H1 (cell line): ENCODE measurements at regions of chr20 and their contacts with region 1.

Region 1: GRCh38 chr20:44111712-44112335 is 75.2 kb downstream of the JPH2 start:
- DNase-seq: no peak
- H3K4me3 ChIP-seq: no peak overlapping the region
- H3K27ac ChIP-seq: no peak overlapping the region
- H3K4me1 ChIP-seq: no peaks in the 10 kb centered on the region; a peak in 1 of 7 replicates
- H3K27me3 ChIP-seq: no peaks in the 10 kb centered on the region
- CTCF ChIP-seq: no peak
- EP300 ChIP-seq: no peak
- POLR2A ChIP-seq: no peak
- RAD21 ChIP-seq: no peak

Region 2: GRCh38 chr20:43558412-43559146 is 553.2 kb before region 1 on chr20 and contains the start of gene SGK2:
- CTCF ChIA-PET with region 1: no interaction called
- POLR2A ChIA-PET with region 1: no interaction called
- DNase-seq: no peak
- H3K4me3 ChIP-seq: no peak within 1 kb of the TSS
- H3K27ac ChIP-seq: no peak within 1 kb of the TSS
- H3K4me1 ChIP-seq: no peaks in the 10 kb centered on the region
- H3K27me3 ChIP-seq: no peaks in the 10 kb centered on the region
- CTCF ChIP-seq: no peak
- EP300 ChIP-seq: no peak
- POLR2A ChIP-seq: no peak
- RAD21 ChIP-seq: no peak
- total RNA-seq, gene SGK2: 0.23 TPM in 1 of 2 replicates, not detected in the other

Region 3: GRCh38 chr20:43963872-43964791 is 147.7 kb before region 1 on chr20:
- CTCF ChIA-PET with region 1: no interaction called
- POLR2A ChIA-PET with region 1: no interaction called
- DNase-seq: no peak
- H3K4me3 ChIP-seq: no peak overlapping the region
- H3K27ac ChIP-seq: no peak overlapping the region
- H3K4me1 ChIP-seq: peaks cover 0 to 20% (median 5%) of the 10 kb centered on the region in 4 experiments; a peak in 5 of 7 replicates
- H3K27me3 ChIP-seq: peaks cover 0 to 4% (median under 1%) of the 10 kb centered on the region in 4 experiments; a peak in 3 of 7 replicates
- CTCF ChIP-seq: no peak
- EP300 ChIP-seq: no peak
- POLR2A ChIP-seq: no peak
- RAD21 ChIP-seq: no peak

Region 4: DNA sequence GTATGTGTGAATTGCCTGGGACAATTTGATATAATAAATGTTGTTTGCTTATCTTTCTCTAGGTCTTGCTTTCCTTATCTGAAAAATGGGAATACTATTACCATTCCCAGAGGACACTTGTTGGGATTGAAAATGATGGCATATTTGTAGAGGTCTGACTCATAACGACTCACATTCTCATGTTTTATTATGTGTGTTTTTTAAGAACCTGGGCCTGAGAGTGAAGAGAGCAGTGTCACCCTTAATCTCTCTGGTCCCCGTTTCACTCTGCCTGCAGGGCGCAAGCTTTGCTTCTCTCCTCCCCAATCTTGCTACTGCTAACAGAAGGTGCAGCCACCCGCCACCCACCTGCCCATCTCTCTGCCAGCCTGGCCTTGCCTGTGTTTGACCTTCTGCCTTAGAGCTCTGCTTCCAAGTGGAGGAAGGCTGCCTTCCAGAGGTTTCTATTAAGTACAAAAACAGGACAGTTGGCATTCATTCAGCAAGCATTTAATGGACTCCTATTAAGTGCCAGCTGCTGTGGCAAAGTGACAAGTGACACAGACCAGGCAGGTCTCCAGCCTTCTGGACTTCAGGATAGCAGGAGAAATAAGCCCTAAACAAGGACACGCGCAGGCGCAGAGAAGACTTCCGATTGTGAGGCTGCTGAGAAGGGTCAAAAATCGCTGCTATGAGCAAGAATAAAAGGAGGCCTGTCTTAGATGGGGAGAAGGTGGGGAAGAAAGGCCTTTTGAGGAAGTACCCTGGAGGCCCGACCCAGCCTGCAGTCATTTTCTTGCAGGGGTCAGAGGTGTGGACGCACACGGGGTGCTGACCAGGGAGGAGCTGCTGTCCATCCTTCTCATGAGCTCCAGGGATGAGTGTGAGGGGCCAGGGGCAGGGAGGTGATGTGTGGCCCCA is 37.3 kb before region 1 on chr20:
- CTCF ChIA-PET with region 1: no interaction called
- POLR2A ChIA-PET with region 1: no interaction called
- DNase-seq: peak in 1 of 2 experiments; percentile 33
- H3K4me3 ChIP-seq: no peak overlapping the region
- H3K27ac ChIP-seq: no peak overlapping the region
- H3K4me1 ChIP-seq: peaks cover 0 to 3% (median 0%) of the 10 kb centered on the region in 4 experiments; a peak in 2 of 7 replicates
- H3K27me3 ChIP-seq: no peaks in the 10 kb centered on the region
- CTCF ChIP-seq: no peak
- EP300 ChIP-seq: no peak
- POLR2A ChIP-seq: no peak
- RAD21 ChIP-seq: no peak

Region 5: GRCh38 chr20:44137210-44137801 is 25.5 kb after region 1 on chr20:
- CTCF ChIA-PET with region 1: interaction called, 20 read pairs
- POLR2A ChIA-PET with region 1: interaction called, 3 read pairs
- DNase-seq: peak; percentile 25 to 55
- H3K4me3 ChIP-seq: peak overlapping the region in 1 of 4 experiments; percentile 31; a peak in 1 of 8 replicates
- H3K27ac ChIP-seq: 0 out of 2 replicates have a peak overlapping the region, but pooled peaks have one; percentile 28
- H3K4me1 ChIP-seq: peaks cover 0 to 4% (median 2%) of the 10 kb centered on the region in 4 experiments; a peak in 3 of 7 replicates
- H3K27me3 ChIP-seq: no peaks in the 10 kb centered on the region
- CTCF ChIP-seq: no peak
- EP300 ChIP-seq: no peak
- POLR2A ChIP-seq: no peak
- RAD21 ChIP-seq: no peak

Region 6: DNA sequence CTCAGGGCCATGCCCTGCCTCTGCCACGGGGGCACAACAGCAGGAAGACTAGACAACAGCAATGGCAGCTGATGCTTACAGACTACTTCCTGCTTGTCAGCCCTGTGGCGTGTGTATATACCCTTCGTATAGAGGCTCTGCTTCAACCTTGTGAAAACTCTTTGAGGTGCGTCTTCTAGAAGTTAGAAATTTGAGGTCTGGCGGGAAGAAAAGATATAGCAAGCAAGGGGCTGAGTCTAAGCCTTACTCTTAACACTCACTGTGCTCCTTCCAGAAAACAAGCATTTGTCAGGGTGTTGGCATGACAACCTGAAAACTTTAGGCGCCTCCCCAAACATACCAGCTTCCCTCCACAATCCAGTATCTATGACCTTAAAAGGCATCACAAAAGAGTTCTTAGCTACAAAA is 41.8 kb after region 1 on chr20:
- CTCF ChIA-PET with region 1: interaction called, 21 read pairs
- POLR2A ChIA-PET with region 1: no interaction called
- DNase-seq: no peak
- H3K4me3 ChIP-seq: no peak overlapping the region
- H3K27ac ChIP-seq: no peak overlapping the region
- H3K4me1 ChIP-seq: no peaks in the 10 kb centered on the region; a peak in 1 of 7 replicates
- H3K27me3 ChIP-seq: no peaks in the 10 kb centered on the region
- CTCF ChIP-seq: no peak
- EP300 ChIP-seq: no peak
- POLR2A ChIP-seq: no peak
- RAD21 ChIP-seq: no peak

Region 7: DNA sequence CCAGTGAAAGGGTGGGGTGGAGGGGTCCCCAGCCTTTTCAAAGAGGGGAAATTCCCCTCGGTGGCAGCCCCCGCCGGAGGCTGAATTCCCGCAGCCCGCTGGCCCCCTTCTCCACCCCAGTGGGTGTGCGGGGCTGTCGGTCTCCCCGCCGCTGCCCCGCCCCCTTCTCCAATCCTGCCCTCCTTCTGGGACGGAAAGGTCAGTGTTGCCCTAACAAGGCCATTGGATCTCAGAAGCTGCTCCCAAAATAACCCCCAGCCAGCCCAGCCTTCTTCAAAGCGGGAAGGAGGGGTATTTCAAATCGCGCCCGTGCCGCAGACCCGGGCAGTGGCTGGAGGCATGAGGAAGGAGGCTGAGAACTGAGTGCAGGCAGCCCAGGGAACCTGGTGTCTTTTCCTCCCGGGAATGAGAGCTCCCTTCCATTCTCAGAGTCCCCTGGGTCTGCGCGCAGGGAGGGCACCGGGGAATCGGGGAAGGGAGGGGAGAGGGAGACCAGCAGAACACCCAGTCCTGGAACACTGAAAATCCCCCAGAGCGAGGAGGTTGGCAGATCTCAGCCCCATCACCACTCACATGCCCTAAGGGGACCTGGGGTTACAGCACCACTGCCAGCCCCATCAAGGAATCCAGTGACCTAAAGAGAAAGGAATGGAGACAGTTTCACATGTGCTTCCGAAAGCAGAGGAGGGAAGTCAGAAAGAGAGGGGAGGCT is 75.4 kb after region 1 on chr20 and contains the start of gene JPH2:
- CTCF ChIA-PET with region 1: interaction called, 512 read pairs
- POLR2A ChIA-PET with region 1: interaction called, 13 read pairs
- DNase-seq: peak in 1 of 2 experiments; percentile 77
- H3K4me3 ChIP-seq: peak within 1 kb of the TSS; percentile 27 to 66 (median 46)
- H3K27ac ChIP-seq: no peak within 1 kb of the TSS
- H3K4me1 ChIP-seq: peaks cover 0 to 13% (median 6%) of the 10 kb centered on the region in 4 experiments; a peak in 5 of 7 replicates
- H3K27me3 ChIP-seq: peaks cover 0 to 4% (median 1%) of the 10 kb centered on the region in 4 experiments; a peak in 2 of 7 replicates
- CTCF ChIP-seq: no peak
- EP300 ChIP-seq: no peak
- POLR2A ChIP-seq: no peak; a peak in 1 of 3 replicates
- RAD21 ChIP-seq: no peak
- total RNA-seq, gene JPH2: 1.3 and 1.5 TPM in 2 replicates

Region 8: DNA sequence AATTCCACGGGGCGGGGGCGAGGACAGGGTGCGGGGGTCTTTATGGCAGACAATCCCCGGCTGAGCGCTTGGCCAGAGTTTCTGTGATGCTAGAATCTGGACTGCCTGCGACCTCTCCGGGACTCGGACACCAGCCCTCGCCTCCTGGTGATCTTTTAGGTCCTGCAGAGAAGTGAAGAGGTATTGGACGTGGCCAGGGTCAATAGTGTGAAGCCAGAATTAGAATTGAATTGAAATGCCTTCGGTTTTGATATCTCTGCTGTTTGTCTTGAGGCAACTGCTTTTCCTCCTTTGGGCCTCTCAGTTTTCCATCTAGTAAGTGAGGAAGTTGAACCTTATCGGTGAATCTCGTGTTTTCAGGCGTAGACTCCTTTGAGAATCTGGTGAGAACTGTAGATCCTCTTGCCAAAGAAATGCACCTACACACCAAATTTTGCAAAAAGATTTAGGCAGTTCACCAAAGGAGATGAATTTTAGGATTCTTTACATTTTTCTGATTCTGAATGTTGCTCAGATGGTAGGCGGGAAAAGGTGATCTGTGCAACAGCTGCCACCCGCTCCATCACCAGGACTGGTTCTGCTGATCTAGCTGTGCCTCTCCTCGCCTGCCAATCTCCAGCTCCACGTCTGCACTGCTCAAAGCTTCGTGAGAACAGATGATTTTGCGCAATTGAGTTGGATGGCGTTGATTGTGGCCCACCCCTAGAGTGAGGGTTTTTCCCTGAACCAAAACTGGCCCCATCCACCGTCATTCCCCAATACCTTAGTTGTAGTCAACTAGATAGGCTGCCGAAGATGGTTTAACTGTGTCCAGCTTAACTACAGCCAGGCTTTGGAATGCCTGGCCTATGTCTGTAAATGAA is 99.6 kb after region 1 on chr20:
- CTCF ChIA-PET with region 1: interaction called, 19 read pairs
- POLR2A ChIA-PET with region 1: interaction called, 4 read pairs
- DNase-seq: no peak
- H3K4me3 ChIP-seq: peak overlapping the region; percentile 87 to 99 (median 97)
- H3K27ac ChIP-seq: peak overlapping the region; percentile 79
- H3K4me1 ChIP-seq: peaks cover 1 to 6% (median 5%) of the 10 kb centered on the region in 4 experiments
- H3K27me3 ChIP-seq: no peaks in the 10 kb centered on the region
- CTCF ChIP-seq: no peak
- EP300 ChIP-seq: no peak
- POLR2A ChIP-seq: no peak
- RAD21 ChIP-seq: no peak